ENCODE measurements at regions of chr2 and their contacts with region 1.

Region 1: GRCh38 chr2:97966518-97967215 is 29.1 kb downstream of the TMEM131 start:
- DNase-seq: no peak
- H3K4me3 Mint-ChIP-seq: no peak overlapping the region
- H3K27ac Mint-ChIP-seq: no peak overlapping the region
- H3K4me1 Mint-ChIP-seq: peaks cover 72% of the 10 kb centered on the region
- H3K27me3 Mint-ChIP-seq: no peaks in the 10 kb centered on the region

Region 2: GRCh38 chr2:97688062-97688827 is 278.4 kb before region 1 on chr2:
- CTCF ChIA-PET with region 1: no interaction called
- POLR2A ChIA-PET with region 1: no interaction called
- intact Hi-C with region 1: no loop called
- DNase-seq: peak; percentile 28
- H3K4me3 Mint-ChIP-seq: peak overlapping the region; percentile 9
- H3K27ac Mint-ChIP-seq: peak overlapping the region; percentile 84
- H3K4me1 Mint-ChIP-seq: peaks cover 13% of the 10 kb centered on the region
- H3K27me3 Mint-ChIP-seq: no peaks in the 10 kb centered on the region

Region 3: DNA sequence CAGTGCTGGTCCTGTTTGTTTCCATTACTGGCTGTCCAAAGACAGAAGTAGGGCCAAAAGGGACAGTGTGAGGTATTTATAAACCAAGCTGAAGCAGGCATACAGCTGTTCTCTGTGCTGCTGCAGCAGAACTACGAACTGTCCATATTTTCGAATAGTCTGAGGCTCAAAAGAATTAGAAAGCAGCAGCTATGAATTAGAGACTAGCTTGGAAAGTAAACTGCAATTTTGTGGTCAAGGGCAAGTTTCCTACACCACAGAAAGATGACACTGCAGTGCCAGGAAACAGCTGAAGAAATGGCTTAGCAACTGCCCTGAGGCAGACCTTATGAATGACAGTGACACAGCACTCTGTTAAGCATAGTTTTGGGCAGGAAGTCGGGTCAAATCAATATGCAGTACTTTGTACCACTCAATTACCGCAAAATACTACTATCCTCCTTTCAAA is 96.2 kb before region 1 on chr2:
- CTCF ChIA-PET with region 1: no interaction called
- POLR2A ChIA-PET with region 1: interaction called, 5 read pairs
- intact Hi-C with region 1: loop called (anchors 1 kb)
- DNase-seq: peak; percentile 74
- H3K4me3 Mint-ChIP-seq: no peak overlapping the region
- H3K27ac Mint-ChIP-seq: peak overlapping the region; percentile 5
- H3K4me1 Mint-ChIP-seq: peaks cover 41% of the 10 kb centered on the region
- H3K27me3 Mint-ChIP-seq: no peaks in the 10 kb centered on the region

Region 4: GRCh38 chr2:97911206-97911921 is 55.3 kb before region 1 on chr2:
- CTCF ChIA-PET with region 1: interaction called, 3 read pairs
- POLR2A ChIA-PET with region 1: no interaction called
- intact Hi-C with region 1: loop called (anchors 5 kb)
- DNase-seq: no peak
- H3K4me3 Mint-ChIP-seq: no peak overlapping the region
- H3K27ac Mint-ChIP-seq: no peak overlapping the region
- H3K4me1 Mint-ChIP-seq: peaks cover 40% of the 10 kb centered on the region
- H3K27me3 Mint-ChIP-seq: no peaks in the 10 kb centered on the region

Region 5: DNA sequence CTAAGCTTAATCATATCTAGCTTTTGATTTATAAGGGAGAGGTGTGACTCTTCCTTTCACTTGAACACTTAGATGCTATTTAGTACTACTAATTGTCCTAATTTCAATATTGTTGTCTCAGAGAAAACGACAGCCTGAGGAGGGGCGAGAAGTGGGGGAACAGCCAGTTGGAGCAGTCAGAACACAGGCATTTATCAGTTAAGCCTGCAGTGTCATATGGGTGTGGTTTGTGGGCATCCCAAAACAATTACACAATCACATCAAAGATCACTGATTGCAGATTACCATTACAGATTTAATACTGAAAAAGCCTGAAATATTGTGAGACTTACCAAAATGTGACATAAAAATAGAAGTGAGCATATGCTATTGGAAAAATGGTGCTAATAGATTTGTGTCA is 13.2 kb after region 1 on chr2:
- CTCF ChIA-PET with region 1: no interaction called
- POLR2A ChIA-PET with region 1: interaction called, 6 read pairs
- intact Hi-C with region 1: loop called (anchors 1 kb)
- DNase-seq: no peak
- H3K4me3 Mint-ChIP-seq: no peak overlapping the region
- H3K27ac Mint-ChIP-seq: no peak overlapping the region
- H3K4me1 Mint-ChIP-seq: peaks cover 32% of the 10 kb centered on the region
- H3K27me3 Mint-ChIP-seq: no peaks in the 10 kb centered on the region